ENCODE measurements at regions of chr16 and their contacts with region 1.

Region 1: DNA sequence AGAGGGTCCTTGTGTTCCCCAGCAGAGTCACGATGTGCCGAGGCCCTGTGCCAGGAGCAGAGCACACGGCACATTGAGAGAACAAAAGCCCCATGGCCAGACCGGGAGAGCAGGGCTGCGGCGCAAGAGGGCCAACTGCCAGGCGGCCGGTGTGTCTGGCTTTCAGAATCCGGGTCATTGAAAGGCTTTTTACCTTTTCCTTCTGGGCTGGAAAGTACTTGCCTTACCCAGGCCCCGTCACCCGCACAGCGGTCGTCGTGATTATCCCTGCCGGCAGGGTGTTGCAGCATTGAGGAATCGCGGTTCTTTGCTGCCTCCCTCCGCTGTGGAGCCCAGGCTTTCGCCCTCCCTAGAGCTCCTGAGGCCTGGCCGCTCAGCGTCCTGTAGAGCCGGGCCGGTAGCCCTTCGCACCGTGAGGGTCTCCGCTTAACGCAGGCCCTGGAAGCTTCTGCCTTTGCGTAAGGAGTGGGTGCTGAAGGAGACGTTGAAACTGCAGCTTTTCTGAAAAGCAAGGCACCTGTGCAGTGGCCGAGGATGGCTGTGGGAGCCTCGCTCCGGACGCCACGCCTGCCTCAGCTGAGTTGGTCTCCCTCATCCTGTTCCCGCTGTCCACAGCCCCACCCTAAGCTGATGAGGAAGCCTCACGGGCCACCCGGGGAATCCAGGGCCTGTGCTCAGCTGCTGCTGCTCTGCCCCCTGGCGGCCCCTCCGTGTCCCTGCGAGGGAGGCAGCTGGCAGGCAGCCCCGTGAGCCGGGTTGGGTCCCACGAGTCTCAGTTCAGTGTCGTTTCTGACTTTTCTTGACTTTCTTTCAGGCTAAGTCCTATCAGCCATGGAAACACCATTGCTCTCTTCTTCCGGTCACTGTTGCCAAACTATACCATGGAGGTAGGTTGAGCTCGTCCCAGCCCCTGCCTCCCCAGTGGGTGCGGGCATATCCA is 8.6 kb upstream of the MC1R start:
- DNase-seq: no peak
- H3K4me3 ChIP-seq: no peak overlapping the region
- H3K27ac ChIP-seq: peak overlapping the region; percentile 21
- H3K27me3 ChIP-seq: no peaks in the 10 kb centered on the region
- CTCF ChIP-seq: peak; percentile 76

Region 2: GRCh38 chr16:89693931-89694783 is 215.9 kb before region 1 on chr16:
- CTCF ChIA-PET with region 1: no interaction called
- POLR2A ChIA-PET with region 1: no interaction called
- DNase-seq: no peak
- H3K4me3 ChIP-seq: no peak overlapping the region
- H3K27ac ChIP-seq: no peak overlapping the region
- H3K27me3 ChIP-seq: no peaks in the 10 kb centered on the region
- CTCF ChIP-seq: no peak

Region 3: DNA sequence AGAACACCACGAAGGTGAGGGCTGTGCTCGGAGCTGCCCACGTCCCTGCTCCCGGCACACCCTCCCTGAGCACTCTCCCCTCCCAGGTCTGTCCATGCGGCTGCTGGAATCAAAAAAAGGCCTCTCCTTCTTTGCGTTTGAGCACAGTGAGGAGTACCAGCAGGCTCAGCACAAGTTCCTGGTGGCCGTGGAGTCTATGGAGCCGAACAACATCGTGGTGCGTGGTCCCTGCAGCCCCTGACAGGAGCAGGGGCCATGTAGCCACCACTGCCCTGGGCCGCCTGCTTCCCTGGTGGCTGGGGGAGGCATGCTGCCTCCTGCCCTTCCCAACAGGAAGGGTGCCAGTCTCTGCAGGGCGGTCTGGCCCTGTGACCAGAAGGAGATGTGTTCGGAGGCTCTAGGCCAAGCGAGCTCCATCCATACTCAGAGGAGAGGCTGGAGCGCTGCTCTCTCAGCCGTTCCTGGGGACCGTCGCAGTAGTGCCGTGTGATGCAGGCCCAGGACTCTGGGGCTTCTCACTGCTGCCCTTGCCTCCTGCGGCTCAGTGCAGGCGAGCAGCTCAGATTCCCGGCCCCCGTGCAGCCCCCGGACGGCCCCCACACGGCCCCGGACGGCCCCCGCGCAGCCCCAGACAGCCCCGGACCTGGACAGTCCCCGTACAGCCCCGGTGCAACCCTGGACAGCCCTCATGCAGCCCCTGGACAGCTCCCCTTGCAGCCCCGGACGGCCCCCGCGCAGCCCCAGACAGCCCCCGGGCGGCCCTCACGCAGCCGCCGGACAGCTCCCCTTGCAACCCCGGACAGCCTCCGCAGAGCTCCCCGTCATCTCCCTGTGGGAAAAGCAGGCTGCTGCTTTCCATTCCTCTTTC is 16.2 kb before region 1 on chr16:
- CTCF ChIA-PET with region 1: interaction called, 13 read pairs
- POLR2A ChIA-PET with region 1: interaction called, 10 read pairs
- DNase-seq: no peak
- H3K4me3 ChIP-seq: no peak overlapping the region
- H3K27ac ChIP-seq: no peak overlapping the region
- H3K27me3 ChIP-seq: no peaks in the 10 kb centered on the region
- CTCF ChIP-seq: no peak

Region 4: GRCh38 chr16:90022209-90023064 is 112.4 kb after region 1 on chr16:
- CTCF ChIA-PET with region 1: no interaction called
- POLR2A ChIA-PET with region 1: no interaction called
- DNase-seq: peak; percentile 55
- H3K4me3 ChIP-seq: peak overlapping the region; percentile 79
- H3K27ac ChIP-seq: peak overlapping the region; percentile 31
- H3K27me3 ChIP-seq: no peaks in the 10 kb centered on the region
- CTCF ChIP-seq: no peak